ENCODE measurements at regions of chr17 and their contacts with region 1.

Region 1: DNA sequence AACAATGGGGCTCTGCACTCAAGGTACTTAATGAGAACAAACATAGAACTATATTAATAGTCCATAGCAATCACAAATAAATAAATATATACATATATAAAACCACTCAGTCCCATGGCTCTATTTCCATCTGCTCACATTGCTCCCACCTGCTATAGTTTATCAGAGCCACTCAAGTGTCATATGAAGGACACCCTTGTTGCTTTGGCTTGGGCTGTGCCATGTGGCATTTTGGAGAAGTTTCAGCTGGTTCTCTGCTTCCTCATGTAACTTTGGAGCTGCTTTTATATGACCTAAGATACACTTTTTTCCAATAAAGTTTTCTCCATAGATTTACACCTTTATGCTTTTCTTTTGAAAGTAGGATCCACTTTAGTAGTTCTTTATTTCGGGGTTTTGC is 126.4 kb downstream of the KCNJ2 start:
- DNase-seq: no peak
- ATAC-seq: no peak
- H3K4me3 ChIP-seq: no peak overlapping the region
- H3K27ac ChIP-seq: no peak overlapping the region
- H3K4me1 ChIP-seq: no peaks in the 10 kb centered on the region
- H3K27me3 ChIP-seq: no peaks in the 10 kb centered on the region
- CTCF ChIP-seq: no peak
- EP300 ChIP-seq: no peak
- POLR2A ChIP-seq: no peak
- RAD21 ChIP-seq: no peak

Region 2: DNA sequence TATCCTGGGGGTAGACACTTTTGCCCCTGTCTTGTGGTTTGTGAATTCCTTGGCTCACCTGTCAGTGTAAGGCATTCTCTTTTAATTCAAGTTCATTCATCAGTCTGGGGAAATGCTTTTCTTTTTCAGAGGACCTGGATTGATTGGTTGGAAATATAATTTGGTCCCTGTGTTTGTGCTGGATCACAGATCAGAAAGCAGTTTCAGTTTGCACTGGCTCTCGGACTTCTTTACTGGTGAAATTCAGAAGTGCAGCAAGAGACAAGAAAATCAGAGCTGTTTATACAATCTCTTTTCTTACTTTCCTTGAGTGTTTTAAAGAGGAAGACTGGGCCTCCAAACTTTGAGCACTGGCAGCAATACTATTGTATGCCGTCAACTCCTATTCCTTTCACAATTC is 382.5 kb before region 1 on chr17:
- CTCF ChIA-PET with region 1: no interaction called
- POLR2A ChIA-PET with region 1: no interaction called
- RAD21 ChIA-PET with region 1: no interaction called
- SMC1A ChIA-PET with region 1: no interaction called
- in situ Hi-C with region 1: no loop called
- intact Hi-C with region 1: no loop called
- DNase-seq: no peak
- ATAC-seq: no peak
- H3K4me3 ChIP-seq: no peak overlapping the region
- H3K27ac ChIP-seq: no peak overlapping the region
- H3K4me1 ChIP-seq: no peaks in the 10 kb centered on the region
- H3K27me3 ChIP-seq: no peaks in the 10 kb centered on the region
- CTCF ChIP-seq: no peak
- EP300 ChIP-seq: no peak
- POLR2A ChIP-seq: no peak
- RAD21 ChIP-seq: no peak

Region 3: GRCh38 chr17:70168977-70169708 is 126.6 kb before region 1 on chr17 and contains the start of gene KCNJ2:
- CTCF ChIA-PET with region 1: interaction called, 3 read pairs
- POLR2A ChIA-PET with region 1: interaction called, 3 read pairs
- RAD21 ChIA-PET with region 1: interaction called, 11 read pairs
- SMC1A ChIA-PET with region 1: interaction called, 12 read pairs
- in situ Hi-C with region 1: no loop called
- intact Hi-C with region 1: no loop called
- DNase-seq: no peak
- ATAC-seq: peak; percentile 95
- H3K4me3 ChIP-seq: peak within 1 kb of the TSS; percentile 38
- H3K27ac ChIP-seq: no peak within 1 kb of the TSS
- H3K4me1 ChIP-seq: peaks cover 8% of the 10 kb centered on the region
- H3K27me3 ChIP-seq: peaks cover 0 to 10% of the 10 kb centered on the region in 2 experiments; a peak in 1 of 4 replicates
- CTCF ChIP-seq: no peak
- EP300 ChIP-seq: no peak
- POLR2A ChIP-seq: no peak
- RAD21 ChIP-seq: no peak
- polyA plus RNA-seq, gene KCNJ2: 1.6 to 3.0 TPM

Region 4: GRCh38 chr17:70242781-70243437 is 52.8 kb before region 1 on chr17:
- CTCF ChIA-PET with region 1: interaction called, 4 read pairs
- POLR2A ChIA-PET with region 1: interaction called, 3 read pairs
- RAD21 ChIA-PET with region 1: interaction called, 7 read pairs
- SMC1A ChIA-PET with region 1: interaction called, 13 read pairs
- in situ Hi-C with region 1: no loop called
- intact Hi-C with region 1: loop called (anchors 5 kb)
- DNase-seq: no peak
- ATAC-seq: peak; percentile 90
- H3K4me3 ChIP-seq: no peak overlapping the region
- H3K27ac ChIP-seq: no peak overlapping the region
- H3K4me1 ChIP-seq: no peaks in the 10 kb centered on the region
- H3K27me3 ChIP-seq: no peaks in the 10 kb centered on the region
- CTCF ChIP-seq: no peak
- EP300 ChIP-seq: no peak
- POLR2A ChIP-seq: no peak
- RAD21 ChIP-seq: no peak

Region 5: GRCh38 chr17:70313057-70313852 is 17.5 kb after region 1 on chr17:
- CTCF ChIA-PET with region 1: interaction called, 10 read pairs
- POLR2A ChIA-PET with region 1: interaction called, 12 read pairs
- RAD21 ChIA-PET with region 1: interaction called, 25 read pairs
- SMC1A ChIA-PET with region 1: interaction called, 27 read pairs
- in situ Hi-C with region 1: no loop called
- intact Hi-C with region 1: no loop called
- DNase-seq: no peak
- ATAC-seq: peak; percentile 82
- H3K4me3 ChIP-seq: no peak overlapping the region
- H3K27ac ChIP-seq: no peak overlapping the region
- H3K4me1 ChIP-seq: no peaks in the 10 kb centered on the region
- H3K27me3 ChIP-seq: no peaks in the 10 kb centered on the region
- CTCF ChIP-seq: no peak
- EP300 ChIP-seq: no peak
- POLR2A ChIP-seq: no peak
- RAD21 ChIP-seq: no peak

Region 6: DNA sequence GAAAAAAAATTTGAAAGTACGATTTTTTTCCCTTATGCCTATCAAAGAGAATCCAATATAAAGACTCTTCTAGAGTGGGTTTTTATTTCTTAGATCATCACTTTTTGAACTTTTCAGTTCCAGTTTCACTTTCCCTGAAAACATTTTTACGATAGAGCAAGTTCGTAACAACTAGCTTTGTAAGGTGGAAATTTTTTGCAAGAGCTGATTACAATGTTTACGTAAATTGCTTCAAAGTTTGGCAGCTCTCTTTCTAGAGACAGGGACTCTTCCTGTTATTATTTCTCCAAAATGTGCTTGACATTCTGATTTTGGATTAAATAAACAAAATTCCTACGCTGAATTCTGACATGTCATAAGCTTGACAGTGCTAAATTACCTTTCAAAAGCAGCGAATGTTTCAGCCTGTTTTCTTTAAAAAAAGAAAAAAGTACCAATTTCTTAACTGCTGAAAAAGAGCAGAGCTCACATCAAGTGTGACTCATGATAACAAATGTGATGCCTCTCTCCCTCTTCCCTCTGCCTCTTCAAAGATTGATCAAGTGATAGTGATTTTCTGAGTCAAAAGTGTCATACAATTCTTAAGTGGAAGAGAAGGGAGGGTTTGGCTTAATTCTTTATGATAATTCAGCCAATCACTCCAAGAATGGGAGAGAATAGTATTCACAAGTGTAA is 48.8 kb after region 1 on chr17:
- CTCF ChIA-PET with region 1: interaction called, 3 read pairs
- POLR2A ChIA-PET with region 1: interaction called, 4 read pairs
- RAD21 ChIA-PET with region 1: interaction called, 12 read pairs
- SMC1A ChIA-PET with region 1: interaction called, 14 read pairs
- in situ Hi-C with region 1: no loop called
- intact Hi-C with region 1: no loop called
- DNase-seq: no peak
- ATAC-seq: peak; percentile 74
- H3K4me3 ChIP-seq: no peak overlapping the region
- H3K27ac ChIP-seq: no peak overlapping the region
- H3K4me1 ChIP-seq: no peaks in the 10 kb centered on the region
- H3K27me3 ChIP-seq: no peaks in the 10 kb centered on the region
- CTCF ChIP-seq: no peak
- EP300 ChIP-seq: no peak
- POLR2A ChIP-seq: no peak
- RAD21 ChIP-seq: no peak

Region 7: GRCh38 chr17:70375813-70376770 is 80.4 kb after region 1 on chr17:
- CTCF ChIA-PET with region 1: no interaction called
- POLR2A ChIA-PET with region 1: no interaction called
- RAD21 ChIA-PET with region 1: no interaction called
- SMC1A ChIA-PET with region 1: no interaction called
- in situ Hi-C with region 1: no loop called
- intact Hi-C with region 1: no loop called
- DNase-seq: no peak
- ATAC-seq: no peak
- H3K4me3 ChIP-seq: no peak overlapping the region
- H3K27ac ChIP-seq: no peak overlapping the region
- H3K4me1 ChIP-seq: no peaks in the 10 kb centered on the region
- H3K27me3 ChIP-seq: no peaks in the 10 kb centered on the region
- CTCF ChIP-seq: no peak
- EP300 ChIP-seq: no peak
- POLR2A ChIP-seq: no peak
- RAD21 ChIP-seq: no peak

Region 8: GRCh38 chr17:70405492-70406220 is 109.9 kb after region 1 on chr17:
- CTCF ChIA-PET with region 1: interaction called, 3 read pairs
- POLR2A ChIA-PET with region 1: no interaction called
- RAD21 ChIA-PET with region 1: interaction called, 5 read pairs
- SMC1A ChIA-PET with region 1: interaction called, 4 read pairs
- in situ Hi-C with region 1: no loop called
- intact Hi-C with region 1: loop called (anchors 10 kb)
- DNase-seq: peak; percentile 41
- ATAC-seq: peak; percentile 96
- H3K4me3 ChIP-seq: no peak overlapping the region
- H3K27ac ChIP-seq: no peak overlapping the region
- H3K4me1 ChIP-seq: no peaks in the 10 kb centered on the region
- H3K27me3 ChIP-seq: no peaks in the 10 kb centered on the region
- CTCF ChIP-seq: no peak
- EP300 ChIP-seq: peak in 1 of 2 experiments; percentile 36; a peak in 1 of 4 replicates
- POLR2A ChIP-seq: no peak
- RAD21 ChIP-seq: no peak

Region 9: DNA sequence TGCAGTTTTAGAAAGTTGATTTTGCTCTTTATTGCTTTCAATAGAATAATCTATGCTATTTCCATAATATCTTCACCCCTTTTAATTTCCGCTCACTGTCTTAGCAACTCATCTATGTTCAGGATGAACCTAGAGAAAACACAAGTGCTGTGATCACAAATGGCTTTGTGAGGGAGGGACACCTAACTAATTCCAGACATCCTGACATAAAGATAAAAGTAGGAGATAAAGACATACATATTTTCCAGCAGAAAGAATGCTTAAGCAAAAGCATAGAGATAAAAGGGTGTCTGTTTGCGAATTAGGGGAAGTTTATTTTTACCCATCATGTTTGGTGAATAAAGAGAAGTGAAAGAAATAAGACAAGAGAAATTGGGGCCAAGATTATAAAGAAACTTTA is 127.8 kb after region 1 on chr17:
- CTCF ChIA-PET with region 1: no interaction called
- POLR2A ChIA-PET with region 1: no interaction called
- RAD21 ChIA-PET with region 1: no interaction called
- SMC1A ChIA-PET with region 1: no interaction called
- in situ Hi-C with region 1: no loop called
- intact Hi-C with region 1: no loop called
- DNase-seq: no peak
- ATAC-seq: no peak
- H3K4me3 ChIP-seq: no peak overlapping the region
- H3K27ac ChIP-seq: no peak overlapping the region
- H3K4me1 ChIP-seq: no peaks in the 10 kb centered on the region
- H3K27me3 ChIP-seq: no peaks in the 10 kb centered on the region
- CTCF ChIP-seq: no peak
- EP300 ChIP-seq: no peak
- POLR2A ChIP-seq: no peak
- RAD21 ChIP-seq: no peak

Measured in GM12878 (cell line).